ENCODE measurements at regions of chr21 and their contacts with region 1.

Region 1: DNA sequence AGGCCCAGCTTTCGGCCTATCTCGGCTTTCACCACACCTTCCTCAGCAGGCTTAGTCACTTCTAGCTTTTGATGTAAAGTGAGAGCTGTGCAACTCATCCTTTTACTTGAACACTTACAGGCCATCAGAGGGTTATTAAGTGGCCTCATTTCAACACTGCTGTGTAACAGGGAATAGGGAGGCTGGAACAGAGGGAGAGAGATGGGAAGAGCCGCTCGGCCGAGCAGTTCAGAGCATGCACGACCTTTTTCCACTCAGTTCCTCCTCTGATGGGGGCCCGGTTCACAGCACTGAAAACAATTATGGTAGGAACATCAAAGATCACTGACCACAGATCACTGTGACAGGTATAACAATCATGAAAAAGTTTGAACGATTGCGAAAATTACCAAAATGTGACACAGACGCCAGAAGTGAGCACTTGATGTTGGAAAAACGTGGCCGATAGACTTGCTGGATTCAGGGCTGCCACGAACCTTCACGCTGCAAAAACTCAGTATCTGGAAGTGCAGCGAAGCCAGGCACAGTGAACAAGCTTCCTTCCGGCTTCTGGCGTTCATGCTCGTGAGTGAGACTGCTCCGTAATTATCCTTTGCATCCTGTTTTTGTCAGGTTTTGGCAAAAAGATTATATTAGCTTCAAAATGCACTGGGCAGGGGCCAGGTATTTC is 28.6 kb downstream of the AGPAT3 start:
- DNase-seq: no peak
- H3K4me3 ChIP-seq: no peak overlapping the region
- H3K27ac ChIP-seq: no peak overlapping the region
- H3K4me1 ChIP-seq: no peaks in the 10 kb centered on the region
- H3K27me3 ChIP-seq: no peaks in the 10 kb centered on the region
- CTCF ChIP-seq: no peak

Region 2: GRCh38 chr21:43687566-43688286 is 205.9 kb before region 1 on chr21:
- CTCF ChIA-PET with region 1: no interaction called
- dilution Hi-C with region 1: no loop called
- in situ Hi-C with region 1: no loop called
- intact Hi-C with region 1: no loop called
- DNase-seq: no peak
- H3K4me3 ChIP-seq: no peak overlapping the region
- H3K27ac ChIP-seq: no peak overlapping the region
- H3K4me1 ChIP-seq: peaks cover 19% of the 10 kb centered on the region
- H3K27me3 ChIP-seq: no peaks in the 10 kb centered on the region
- CTCF ChIP-seq: no peak

Region 3: DNA sequence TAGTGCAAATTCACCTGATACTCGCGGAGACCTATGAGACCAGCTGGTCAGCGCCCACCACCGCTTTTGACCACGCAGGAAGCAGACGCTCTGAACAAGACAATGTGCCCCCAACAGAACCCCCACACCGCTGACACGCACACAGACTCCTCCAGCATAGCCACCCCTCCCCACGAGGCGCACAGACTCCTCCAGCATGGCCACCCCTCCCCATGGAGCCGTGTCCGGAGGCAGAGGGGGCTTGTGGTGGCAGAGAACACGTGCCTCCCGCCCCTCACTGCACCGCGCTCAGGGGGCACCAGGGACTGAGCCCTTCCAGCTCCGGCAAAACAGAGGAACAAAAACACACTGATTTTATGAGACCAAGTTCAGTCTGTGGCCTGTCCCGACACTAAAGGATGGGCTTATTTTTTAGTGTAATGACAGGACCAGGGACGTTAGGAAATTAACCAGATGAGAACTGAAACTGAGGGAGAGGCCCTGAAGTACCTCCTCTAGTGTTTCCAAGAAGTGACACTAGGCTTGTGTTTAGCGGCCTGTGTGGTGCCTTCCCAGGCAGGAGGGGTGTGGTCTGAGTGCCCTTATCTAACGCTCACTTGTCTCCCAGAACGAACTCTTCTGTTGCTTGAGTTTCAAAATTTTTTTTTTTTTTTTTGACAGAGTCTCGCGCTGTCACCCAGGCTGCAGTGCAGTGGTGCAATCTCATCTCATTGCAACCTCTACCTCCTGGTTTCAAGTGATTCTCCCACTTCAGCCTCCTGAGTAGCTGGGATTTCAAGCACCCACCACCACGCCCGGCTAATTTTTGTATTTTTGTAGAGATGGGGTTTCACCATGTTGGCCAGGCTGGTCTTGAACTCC is 38.7 kb before region 1 on chr21:
- CTCF ChIA-PET with region 1: no interaction called
- dilution Hi-C with region 1: loop called (anchors 5 kb)
- in situ Hi-C with region 1: no loop called
- intact Hi-C with region 1: no loop called
- DNase-seq: no peak
- H3K4me3 ChIP-seq: no peak overlapping the region
- H3K27ac ChIP-seq: no peak overlapping the region
- H3K4me1 ChIP-seq: no peaks in the 10 kb centered on the region
- H3K27me3 ChIP-seq: no peaks in the 10 kb centered on the region
- CTCF ChIP-seq: no peak

Region 4: DNA sequence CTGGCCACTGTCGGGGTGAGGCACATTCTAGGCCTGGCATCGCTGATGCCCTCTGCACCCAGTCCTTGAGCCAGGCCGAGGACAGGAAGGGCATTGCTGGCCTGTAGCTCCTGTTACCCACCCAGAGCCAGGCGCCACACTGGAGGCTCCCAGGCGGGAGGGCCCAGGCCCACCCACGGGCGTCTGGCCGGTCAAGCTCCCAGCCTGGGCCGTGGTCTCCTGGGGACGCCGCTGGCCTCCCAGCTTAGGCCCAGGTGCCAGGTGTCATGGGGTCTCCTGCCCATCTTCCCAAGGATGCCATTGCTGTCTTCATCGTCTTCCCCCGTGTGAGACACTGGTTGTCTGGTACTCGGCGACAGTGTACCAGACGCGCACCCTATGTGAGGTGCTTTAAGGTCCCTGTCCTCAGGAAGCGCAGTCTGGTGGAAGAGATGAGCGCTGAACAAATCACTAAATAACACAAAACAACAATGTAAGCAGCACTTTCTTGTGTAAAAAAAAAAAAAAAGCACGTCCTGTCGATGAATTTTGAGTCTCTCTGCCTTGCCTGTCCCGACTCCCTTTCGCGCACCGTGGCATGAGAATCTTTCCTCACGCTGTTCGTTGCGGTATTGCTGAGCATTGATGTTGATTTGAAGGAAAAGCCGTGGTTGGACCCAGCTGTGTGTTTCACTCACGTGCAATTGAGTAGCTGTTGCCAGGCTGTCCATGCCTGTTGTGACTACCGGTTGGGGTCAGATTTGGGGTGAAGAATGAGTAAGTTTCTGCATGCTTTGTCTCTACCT is 91.4 kb after region 1 on chr21:
- CTCF ChIA-PET with region 1: no interaction called
- dilution Hi-C with region 1: loop called (anchors 5 kb)
- in situ Hi-C with region 1: no loop called
- intact Hi-C with region 1: no loop called
- DNase-seq: no peak
- H3K4me3 ChIP-seq: no peak overlapping the region
- H3K27ac ChIP-seq: no peak overlapping the region
- H3K4me1 ChIP-seq: no peaks in the 10 kb centered on the region
- H3K27me3 ChIP-seq: no peaks in the 10 kb centered on the region
- CTCF ChIP-seq: no peak

Measured in mammary epithelial cell (primary cell).